HCT116 (cell line): ENCODE measurements at regions of chr1 and their contacts with region 1.

Region 1: GRCh38 chr1:87292684-87293493 is 35.8 kb upstream of the LMO4 start:
- DNase-seq: peak; percentile 36
- ATAC-seq: peak; percentile 82
- H3K4me3 ChIP-seq: no peak overlapping the region
- H3K27ac ChIP-seq: no peak overlapping the region
- H3K4me1 ChIP-seq: no peaks in the 10 kb centered on the region
- H3K27me3 ChIP-seq: no peaks in the 10 kb centered on the region
- CTCF ChIP-seq: peak; percentile 61 to 86 (median 65); a peak in 5 of 6 replicates
- POLR2A ChIP-seq: no peak
- RAD21 ChIP-seq: peak; percentile 84

Region 2: GRCh38 chr1:88061492-88062177 is 768.7 kb after region 1 on chr1:
- CTCF ChIA-PET with region 1: interaction called, 3 read pairs
- POLR2A ChIA-PET with region 1: no interaction called
- RAD21 ChIA-PET with region 1: no interaction called
- intact Hi-C with region 1: loop called (anchors 1 kb)
- DNase-seq: peak; percentile 61
- ATAC-seq: peak; percentile 96
- H3K4me3 ChIP-seq: no peak overlapping the region
- H3K27ac ChIP-seq: no peak overlapping the region
- H3K4me1 ChIP-seq: no peaks in the 10 kb centered on the region
- H3K27me3 ChIP-seq: no peaks in the 10 kb centered on the region
- CTCF ChIP-seq: peak; percentile 88 to 92 (median 89)
- POLR2A ChIP-seq: no peak
- RAD21 ChIP-seq: peak; percentile 74

Region 3: DNA sequence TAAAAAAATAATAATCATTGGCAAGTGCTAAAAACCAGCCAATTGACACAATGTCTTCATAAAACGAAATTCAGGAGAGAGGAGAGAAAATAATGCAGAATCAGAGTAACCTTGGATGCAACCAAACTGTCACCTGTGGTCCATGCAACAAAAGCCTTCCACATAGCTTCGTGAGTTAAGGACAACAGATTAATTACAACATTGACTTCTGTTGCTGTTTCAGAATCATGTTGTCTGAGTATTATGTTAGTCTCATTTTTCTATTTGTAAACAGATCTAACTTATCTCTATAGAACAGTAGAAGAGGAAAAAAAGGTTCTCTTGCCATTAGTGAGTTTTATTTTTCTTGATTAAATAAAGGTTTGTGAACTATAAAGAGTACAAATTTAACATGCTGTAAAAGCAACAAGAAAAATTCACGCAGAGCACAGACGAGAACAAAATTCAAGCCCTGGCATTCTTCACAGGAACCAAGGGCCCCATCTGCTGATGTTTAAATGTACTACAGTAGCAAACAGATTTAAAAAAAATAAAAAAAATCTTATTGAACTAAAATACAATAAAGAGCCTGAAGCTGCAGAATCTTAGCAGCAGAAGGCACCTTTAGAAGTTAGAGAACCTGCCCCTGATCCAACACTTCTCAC is 1010.1 kb after region 1 on chr1:
- CTCF ChIA-PET with region 1: no interaction called
- POLR2A ChIA-PET with region 1: no interaction called
- RAD21 ChIA-PET with region 1: no interaction called
- intact Hi-C with region 1: loop called (anchors 2 kb)
- DNase-seq: no peak
- ATAC-seq: peak; percentile 50; the same call in 1 of the 2 replicates
- H3K4me3 ChIP-seq: no peak overlapping the region
- H3K27ac ChIP-seq: no peak overlapping the region
- H3K4me1 ChIP-seq: no peaks in the 10 kb centered on the region
- H3K27me3 ChIP-seq: no peaks in the 10 kb centered on the region
- CTCF ChIP-seq: peak in 2 of 3 experiments; percentile 38 to 54; a peak in 2 of 6 replicates
- POLR2A ChIP-seq: no peak
- RAD21 ChIP-seq: peak; percentile 67